ENCODE measurements at regions of chr13 and their contacts with region 1.

Region 1: GRCh38 chr13:24220086-24220703 is 59.7 kb downstream of the SPATA13 start:
- DNase-seq: peak; percentile 88
- H3K4me3 ChIP-seq: no peak overlapping the region
- H3K27ac ChIP-seq: no peak overlapping the region
- H3K4me1 ChIP-seq: peaks cover 26% of the 10 kb centered on the region
- H3K27me3 ChIP-seq: no peaks in the 10 kb centered on the region
- CTCF ChIP-seq: peak; percentile 84

Region 2: GRCh38 chr13:23466144-23467002 is 753.8 kb before region 1 on chr13:
- CTCF ChIA-PET with region 1: no interaction called
- POLR2A ChIA-PET with region 1: no interaction called
- intact Hi-C with region 1: loop called (anchors 2 kb)
- DNase-seq: peak; percentile 80
- H3K4me3 ChIP-seq: peak overlapping the region; percentile 43
- H3K27ac ChIP-seq: no peak overlapping the region
- H3K4me1 ChIP-seq: no peaks in the 10 kb centered on the region
- H3K27me3 ChIP-seq: peaks cover 2% of the 10 kb centered on the region
- CTCF ChIP-seq: peak; percentile 68

Region 3: GRCh38 chr13:23921451-23921888 is 298.7 kb before region 1 on chr13:
- CTCF ChIA-PET with region 1: no interaction called
- POLR2A ChIA-PET with region 1: no interaction called
- intact Hi-C with region 1: loop called (anchors 2 kb)
- DNase-seq: peak; percentile 65
- H3K4me3 ChIP-seq: no peak overlapping the region
- H3K27ac ChIP-seq: no peak overlapping the region
- H3K4me1 ChIP-seq: no peaks in the 10 kb centered on the region
- H3K27me3 ChIP-seq: peaks cover 15% of the 10 kb centered on the region
- CTCF ChIP-seq: peak; percentile 82

Region 4: DNA sequence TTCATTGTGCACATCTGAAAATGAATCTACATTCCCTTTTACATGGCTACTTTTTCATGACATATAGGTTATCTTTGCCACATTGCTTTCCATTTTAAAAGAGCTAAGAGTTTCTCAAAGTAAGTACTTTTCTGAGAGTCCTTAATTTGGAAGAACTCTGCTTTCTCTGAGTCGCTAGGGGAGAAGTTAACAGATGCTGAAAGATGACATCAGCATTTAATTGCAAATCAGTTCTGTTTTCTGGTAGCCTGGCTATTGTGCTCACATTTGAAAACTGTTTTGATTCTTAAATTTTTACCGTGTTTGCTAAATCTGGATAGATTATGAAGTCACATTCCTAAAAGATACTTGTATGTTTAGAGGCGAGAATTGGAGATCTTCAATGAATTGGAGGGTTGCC is 215.2 kb before region 1 on chr13:
- CTCF ChIA-PET with region 1: no interaction called
- POLR2A ChIA-PET with region 1: interaction called, 14 read pairs
- intact Hi-C with region 1: no loop called
- DNase-seq: no peak
- H3K4me3 ChIP-seq: no peak overlapping the region
- H3K27ac ChIP-seq: no peak overlapping the region
- H3K4me1 ChIP-seq: no peaks in the 10 kb centered on the region
- H3K27me3 ChIP-seq: no peaks in the 10 kb centered on the region
- CTCF ChIP-seq: no peak

Region 5: DNA sequence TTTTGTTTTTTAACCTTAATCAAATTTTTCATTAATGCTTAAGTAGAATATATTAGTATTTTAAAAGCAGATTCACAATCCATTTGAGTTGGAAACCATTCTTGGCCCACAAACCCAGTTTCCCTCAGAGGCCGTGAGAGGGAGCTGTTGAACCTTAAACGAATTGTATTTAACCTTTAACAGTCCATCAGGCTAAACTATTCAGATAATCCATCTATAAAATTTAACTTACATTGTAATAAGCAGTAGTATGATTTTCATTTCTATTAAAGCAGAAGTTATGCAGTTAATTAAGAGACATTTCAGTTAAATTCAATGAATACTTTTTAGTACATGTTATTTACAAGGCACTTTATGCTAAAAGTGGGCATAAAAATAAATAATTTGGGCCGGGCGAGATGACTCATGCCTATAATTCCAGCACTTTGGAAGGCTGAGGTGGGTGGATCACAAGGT is 199.8 kb before region 1 on chr13:
- CTCF ChIA-PET with region 1: interaction called, 6 read pairs
- POLR2A ChIA-PET with region 1: no interaction called
- intact Hi-C with region 1: loop called (anchors 2 kb)
- DNase-seq: peak; percentile 70
- H3K4me3 ChIP-seq: no peak overlapping the region
- H3K27ac ChIP-seq: no peak overlapping the region
- H3K4me1 ChIP-seq: no peaks in the 10 kb centered on the region
- H3K27me3 ChIP-seq: no peaks in the 10 kb centered on the region
- CTCF ChIP-seq: peak; percentile 85

Region 6: GRCh38 chr13:24053519-24054251 is 166.5 kb before region 1 on chr13:
- CTCF ChIA-PET with region 1: interaction called, 5 read pairs
- POLR2A ChIA-PET with region 1: no interaction called
- intact Hi-C with region 1: loop called (anchors 1 kb)
- DNase-seq: peak; percentile 80
- H3K4me3 ChIP-seq: no peak overlapping the region
- H3K27ac ChIP-seq: no peak overlapping the region
- H3K4me1 ChIP-seq: peaks cover 9% of the 10 kb centered on the region
- H3K27me3 ChIP-seq: no peaks in the 10 kb centered on the region
- CTCF ChIP-seq: peak; percentile 80

Measured in A673 (cell line).